ENCODE measurements at regions of chr14 and their contacts with region 1.

Region 1: GRCh38 chr14:56339855-56340701 is 221.9 kb downstream of the PELI2 start:
- DNase-seq: peak; percentile 60
- ATAC-seq: peak; percentile 41
- H3K4me3 ChIP-seq: no peak overlapping the region
- H3K4me3 Mint-ChIP-seq: no peak overlapping the region
- H3K27ac ChIP-seq: no peak overlapping the region
- H3K27ac Mint-ChIP-seq: no peak overlapping the region
- H3K4me1 ChIP-seq: no peaks in the 10 kb centered on the region
- H3K4me1 Mint-ChIP-seq: peaks cover 14% of the 10 kb centered on the region
- H3K27me3 ChIP-seq: no peaks in the 10 kb centered on the region
- H3K27me3 Mint-ChIP-seq: no peaks in the 10 kb centered on the region
- CTCF ChIP-seq: peak; percentile 73

Region 2: GRCh38 chr14:55731881-55732498 is 608.1 kb before region 1 on chr14:
- CTCF ChIA-PET with region 1: interaction called, 42 read pairs
- POLR2A ChIA-PET with region 1: no interaction called
- intact Hi-C with region 1: loop called (anchors 1 kb)
- DNase-seq: peak; percentile 33
- ATAC-seq: no peak
- H3K4me3 ChIP-seq: no peak overlapping the region
- H3K4me3 Mint-ChIP-seq: no peak overlapping the region
- H3K27ac ChIP-seq: no peak overlapping the region
- H3K27ac Mint-ChIP-seq: no peak overlapping the region
- H3K4me1 ChIP-seq: no peaks in the 10 kb centered on the region
- H3K4me1 Mint-ChIP-seq: no peaks in the 10 kb centered on the region
- H3K27me3 ChIP-seq: no peaks in the 10 kb centered on the region
- H3K27me3 Mint-ChIP-seq: no peaks in the 10 kb centered on the region
- CTCF ChIP-seq: peak; percentile 62

Region 3: DNA sequence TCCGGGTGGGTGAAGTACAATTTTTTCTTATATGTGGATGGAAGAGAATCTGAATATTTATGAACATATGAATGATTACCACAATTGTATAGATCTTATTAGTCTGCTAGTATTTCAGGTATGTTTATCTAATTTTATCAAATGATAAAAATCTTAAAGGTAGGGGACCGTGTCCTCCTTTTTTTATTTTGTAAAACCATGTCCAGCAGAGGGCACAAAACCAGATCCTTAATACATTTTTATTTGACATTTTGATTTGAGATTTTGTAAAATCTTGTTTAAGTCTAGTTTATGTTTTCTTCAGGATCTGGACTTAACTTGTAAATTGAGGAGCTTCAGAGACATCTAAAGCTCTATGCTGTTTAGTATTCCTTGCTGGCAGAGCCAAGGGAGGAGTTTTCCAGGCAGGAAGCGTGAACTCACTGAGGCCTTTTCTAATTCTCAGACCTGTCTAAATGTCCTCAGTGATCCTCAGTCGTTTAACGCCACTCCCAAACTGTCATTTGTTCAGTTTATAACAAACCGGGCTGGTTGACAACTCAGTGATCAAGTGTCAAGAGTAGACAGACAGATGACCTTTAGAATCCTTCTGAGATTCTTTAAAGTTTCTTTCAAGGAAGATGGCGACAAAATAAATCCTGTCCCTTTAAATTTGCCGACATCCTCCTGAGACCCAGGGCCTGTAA is 496.2 kb before region 1 on chr14:
- CTCF ChIA-PET with region 1: interaction called, 6 read pairs
- POLR2A ChIA-PET with region 1: no interaction called
- intact Hi-C with region 1: loop called (anchors 5 kb)
- DNase-seq: no peak
- ATAC-seq: no peak
- H3K4me3 ChIP-seq: no peak overlapping the region
- H3K4me3 Mint-ChIP-seq: no peak overlapping the region
- H3K27ac ChIP-seq: no peak overlapping the region
- H3K27ac Mint-ChIP-seq: no peak overlapping the region
- H3K4me1 ChIP-seq: no peaks in the 10 kb centered on the region
- H3K4me1 Mint-ChIP-seq: no peaks in the 10 kb centered on the region
- H3K27me3 ChIP-seq: no peaks in the 10 kb centered on the region
- H3K27me3 Mint-ChIP-seq: no peaks in the 10 kb centered on the region
- CTCF ChIP-seq: peak; percentile 24

Region 4: DNA sequence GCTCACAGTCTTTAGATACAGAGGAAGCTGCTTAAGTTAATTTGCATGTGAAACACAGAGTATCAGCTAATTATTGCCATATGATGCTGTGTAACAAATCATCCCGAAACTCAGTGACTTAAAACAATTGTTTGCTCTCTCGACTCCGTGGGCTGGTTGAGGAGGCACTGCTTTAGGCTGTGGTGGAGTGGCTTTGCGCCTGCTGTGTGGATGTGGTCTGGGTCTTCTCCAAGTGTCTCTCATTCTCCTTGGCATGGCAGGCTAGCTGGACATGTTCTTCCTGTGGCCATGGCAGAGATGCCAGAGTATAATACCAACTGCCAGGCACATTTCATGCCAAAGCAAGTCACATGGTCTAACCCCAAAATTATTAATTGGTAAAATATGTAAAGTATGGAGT is 181.0 kb before region 1 on chr14:
- CTCF ChIA-PET with region 1: no interaction called
- POLR2A ChIA-PET with region 1: no interaction called
- intact Hi-C with region 1: no loop called
- DNase-seq: no peak
- ATAC-seq: no peak
- H3K4me3 ChIP-seq: no peak overlapping the region
- H3K4me3 Mint-ChIP-seq: no peak overlapping the region
- H3K27ac ChIP-seq: no peak overlapping the region
- H3K27ac Mint-ChIP-seq: no peak overlapping the region
- H3K4me1 ChIP-seq: no peaks in the 10 kb centered on the region
- H3K4me1 Mint-ChIP-seq: peaks cover 5% of the 10 kb centered on the region
- H3K27me3 ChIP-seq: no peaks in the 10 kb centered on the region
- H3K27me3 Mint-ChIP-seq: no peaks in the 10 kb centered on the region
- CTCF ChIP-seq: no peak

Region 5: GRCh38 chr14:56491299-56492285 is 151.5 kb after region 1 on chr14:
- CTCF ChIA-PET with region 1: no interaction called
- POLR2A ChIA-PET with region 1: no interaction called
- intact Hi-C with region 1: no loop called
- DNase-seq: peak; percentile 63
- ATAC-seq: peak; percentile 51
- H3K4me3 ChIP-seq: no peak overlapping the region
- H3K4me3 Mint-ChIP-seq: no peak overlapping the region
- H3K27ac ChIP-seq: no peak overlapping the region
- H3K27ac Mint-ChIP-seq: no peak overlapping the region
- H3K4me1 ChIP-seq: peaks cover 4 to 6% of the 10 kb centered on the region in 2 donors
- H3K4me1 Mint-ChIP-seq: peaks cover 4% of the 10 kb centered on the region
- H3K27me3 ChIP-seq: no peaks in the 10 kb centered on the region
- H3K27me3 Mint-ChIP-seq: peaks cover 6% of the 10 kb centered on the region
- CTCF ChIP-seq: peak; percentile 54

Region 6: DNA sequence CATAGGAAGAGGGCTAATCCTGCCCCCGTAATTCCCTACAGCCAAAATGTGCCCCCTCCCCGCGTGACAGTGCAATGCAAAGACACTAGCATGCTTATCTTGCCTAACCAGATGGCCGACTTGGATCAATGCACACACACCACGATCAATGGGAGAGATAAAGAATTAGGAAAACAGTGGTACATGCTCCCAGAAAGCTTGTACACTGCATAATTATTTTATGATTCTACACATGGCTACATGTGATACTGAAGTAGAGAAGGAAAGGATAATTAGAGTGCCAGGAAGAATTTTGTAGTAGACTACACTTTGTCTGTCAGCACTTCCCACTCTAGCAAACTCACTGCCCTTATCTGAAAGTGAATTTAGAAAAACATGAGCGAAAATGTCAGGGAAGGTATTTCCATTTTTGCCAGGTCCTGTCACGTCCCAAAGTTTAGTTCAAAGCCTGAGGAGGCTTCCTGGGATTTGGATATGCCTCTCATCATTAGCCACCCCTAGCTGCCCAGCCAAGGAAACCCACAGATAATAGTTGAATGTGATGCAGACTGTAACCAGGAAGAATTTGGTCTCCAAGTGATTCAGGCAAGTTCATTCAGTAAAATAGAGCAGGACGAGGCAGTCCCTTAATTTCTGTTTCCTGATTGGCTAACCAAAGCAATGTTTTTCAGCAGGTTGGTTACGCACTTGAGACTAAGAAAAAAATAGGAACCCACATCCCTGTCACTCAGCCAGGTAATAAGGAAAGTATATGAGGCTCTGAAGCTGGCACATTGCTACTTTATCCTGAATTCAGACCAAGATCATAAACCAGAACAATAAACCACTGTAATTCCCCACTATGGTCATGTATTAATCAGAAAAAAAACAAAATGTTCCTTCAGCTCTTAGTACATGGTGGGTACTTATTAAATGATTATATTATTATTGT is 669.8 kb after region 1 on chr14:
- CTCF ChIA-PET with region 1: no interaction called
- POLR2A ChIA-PET with region 1: no interaction called
- intact Hi-C with region 1: no loop called
- DNase-seq: no peak
- ATAC-seq: no peak
- H3K4me3 ChIP-seq: no peak overlapping the region
- H3K4me3 Mint-ChIP-seq: no peak overlapping the region
- H3K27ac ChIP-seq: no peak overlapping the region
- H3K27ac Mint-ChIP-seq: no peak overlapping the region
- H3K4me1 ChIP-seq: no peaks in the 10 kb centered on the region
- H3K4me1 Mint-ChIP-seq: peaks cover 17% of the 10 kb centered on the region
- H3K27me3 ChIP-seq: no peaks in the 10 kb centered on the region
- H3K27me3 Mint-ChIP-seq: peaks cover 3% of the 10 kb centered on the region
- CTCF ChIP-seq: no peak